Activated CD8-positive, alpha-beta T cell treated with anti-CD3 and anti-CD28 coated beads, Interleukin-2, amount 10 ng/mL, durations not matched to agents 7 days and 5 days (primary cell): ENCODE measurements at regions of chr10 and their contacts with region 1.

Region 1: GRCh38 chr10:71285180-71285545 is 33.9 kb upstream of the SLC29A3 start:
- DNase-seq: peak; percentile 44
- ATAC-seq: peak; percentile 52
- H3K4me3 Mint-ChIP-seq: no peak overlapping the region
- H3K27ac Mint-ChIP-seq: no peak overlapping the region
- H3K4me1 Mint-ChIP-seq: peaks cover under 1% of the 10 kb centered on the region
- H3K27me3 Mint-ChIP-seq: no peaks in the 10 kb centered on the region

Region 2: DNA sequence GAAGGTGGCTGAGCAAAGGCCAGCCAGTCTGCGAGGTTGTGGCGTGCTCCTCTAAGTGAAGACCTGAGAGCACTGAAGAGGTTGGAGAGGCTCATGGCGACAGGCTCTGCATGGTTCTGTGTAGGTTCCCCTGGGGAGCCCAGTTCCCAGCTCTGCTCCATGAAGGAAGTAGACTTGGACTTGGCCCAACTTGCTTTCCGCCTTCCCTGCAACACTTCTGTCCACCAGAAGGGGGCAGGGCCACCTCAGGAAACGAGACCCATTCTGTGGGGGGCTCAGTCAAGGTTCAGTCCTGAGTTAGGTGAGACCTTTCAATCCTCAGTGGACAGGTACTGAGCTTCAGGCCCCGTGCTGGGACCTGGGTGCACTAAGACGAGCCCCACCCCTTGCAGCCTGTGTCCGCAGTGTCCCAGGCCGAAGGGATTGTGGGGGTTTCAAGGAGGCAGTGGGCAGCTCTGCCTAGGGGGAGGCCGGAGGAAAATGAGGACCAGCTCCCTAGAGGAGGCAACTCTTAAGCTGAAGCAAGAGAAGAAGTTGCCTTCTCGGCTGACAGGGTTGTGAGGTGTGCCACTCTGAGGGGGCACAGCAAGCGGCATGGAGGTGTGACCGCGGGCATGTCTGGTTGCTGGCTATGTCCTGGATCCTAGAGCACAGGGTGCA is 381.8 kb before region 1 on chr10:
- CTCF ChIA-PET with region 1: interaction called, 10 read pairs
- POLR2A ChIA-PET with region 1: no interaction called
- DNase-seq: peak; percentile 46
- ATAC-seq: peak; percentile 42
- H3K4me3 Mint-ChIP-seq: no peak overlapping the region
- H3K27ac Mint-ChIP-seq: no peak overlapping the region
- H3K4me1 Mint-ChIP-seq: no peaks in the 10 kb centered on the region
- H3K27me3 Mint-ChIP-seq: no peaks in the 10 kb centered on the region

Region 3: GRCh38 chr10:71270301-71271220 is 14.6 kb before region 1 on chr10:
- CTCF ChIA-PET with region 1: interaction called, 14 read pairs
- POLR2A ChIA-PET with region 1: no interaction called
- DNase-seq: peak; percentile 60
- ATAC-seq: peak; percentile 67
- H3K4me3 Mint-ChIP-seq: no peak overlapping the region
- H3K27ac Mint-ChIP-seq: peak overlapping the region; percentile 40
- H3K4me1 Mint-ChIP-seq: peaks cover 12% of the 10 kb centered on the region
- H3K27me3 Mint-ChIP-seq: no peaks in the 10 kb centered on the region